Heart left ventricle (tissue), 16 donors: ENCODE measurements at regions of chr13 and their contacts with region 1.

Region 1: GRCh38 chr13:41061075-41061913 is at the start of gene WBP4:
- DNase-seq: peak; percentile 95 to 96 (median 96)
- ATAC-seq: peak; percentile 78 to 88 (median 84)
- H3K4me3 ChIP-seq: peak within 1 kb of the TSS; percentile 54 to 90 (median 79)
- H3K27ac ChIP-seq: peak within 1 kb of the TSS; percentile 92 to 100 (median 98)
- H3K4me1 ChIP-seq: peaks cover 6 to 71% (median 60%) of the 10 kb centered on the region in 12 donors
- H3K27me3 ChIP-seq: no peaks in the 10 kb centered on the region
- CTCF ChIP-seq: peak in 6 of 12 donors; percentile 10 to 45 (median 30)
- POLR2A ChIP-seq: peak in 1 of 2 donors; percentile 58
- total RNA-seq, gene WBP4: 12.4 to 24.6 (median 20.6) TPM

Region 2: GRCh38 chr13:40624383-40624782 is 436.9 kb before region 1 on chr13:
- intact Hi-C with region 1: no loop called
- DNase-seq: no peak
- ATAC-seq: no peak
- H3K4me3 ChIP-seq: no peak overlapping the region
- H3K27ac ChIP-seq: no peak overlapping the region
- H3K4me1 ChIP-seq: peaks cover 0 to 64% (median 40%) of the 10 kb centered on the region in 12 donors
- H3K27me3 ChIP-seq: no peaks in the 10 kb centered on the region
- CTCF ChIP-seq: no peak
- POLR2A ChIP-seq: no peak

Region 3: DNA sequence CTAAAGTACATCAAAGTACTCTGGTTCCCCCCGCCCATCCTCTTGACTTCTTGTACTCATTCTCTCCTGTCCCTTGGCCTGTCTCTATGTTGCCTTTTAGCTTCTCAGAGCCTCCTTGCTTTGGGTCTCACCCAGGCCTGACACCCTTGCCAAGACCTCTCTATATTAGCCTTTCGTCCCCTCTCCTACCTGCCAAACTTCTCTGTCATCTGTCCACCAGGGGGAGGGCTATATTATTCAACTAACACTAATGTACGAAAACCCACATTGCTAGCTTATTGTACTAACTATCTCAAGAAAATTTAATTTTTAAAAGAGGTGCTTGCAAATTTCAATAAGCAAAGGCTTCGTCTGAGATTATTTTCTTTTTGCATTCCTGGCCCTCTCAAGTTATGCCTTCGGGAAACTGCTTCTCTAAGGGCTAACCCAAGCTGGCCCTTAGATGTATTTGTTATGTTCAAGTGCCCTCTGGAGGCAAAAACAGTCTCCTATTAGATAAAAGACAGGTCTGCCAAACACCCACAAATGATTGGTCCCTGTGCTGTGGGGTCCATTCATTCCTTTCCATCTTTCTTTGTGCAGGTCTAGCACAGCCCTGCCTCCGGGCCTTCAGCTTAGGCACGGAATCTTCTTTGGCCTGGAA is 284.0 kb before region 1 on chr13:
- intact Hi-C with region 1: loop called in 6 of 10 experiments (anchors 5 to 10 kb)
- DNase-seq: no peak
- ATAC-seq: peak; percentile 72 to 87 (median 80)
- H3K4me3 ChIP-seq: peak overlapping the region in 8 of 12 donors; percentile 21 to 54 (median 34)
- H3K27ac ChIP-seq: peak overlapping the region in 1 of 12 donors; percentile 79
- H3K4me1 ChIP-seq: peaks cover 0 to 19% (median 2%) of the 10 kb centered on the region in 12 donors
- H3K27me3 ChIP-seq: no peaks in the 10 kb centered on the region
- CTCF ChIP-seq: peak; percentile 36 to 81 (median 68)
- POLR2A ChIP-seq: no peak

Region 4: DNA sequence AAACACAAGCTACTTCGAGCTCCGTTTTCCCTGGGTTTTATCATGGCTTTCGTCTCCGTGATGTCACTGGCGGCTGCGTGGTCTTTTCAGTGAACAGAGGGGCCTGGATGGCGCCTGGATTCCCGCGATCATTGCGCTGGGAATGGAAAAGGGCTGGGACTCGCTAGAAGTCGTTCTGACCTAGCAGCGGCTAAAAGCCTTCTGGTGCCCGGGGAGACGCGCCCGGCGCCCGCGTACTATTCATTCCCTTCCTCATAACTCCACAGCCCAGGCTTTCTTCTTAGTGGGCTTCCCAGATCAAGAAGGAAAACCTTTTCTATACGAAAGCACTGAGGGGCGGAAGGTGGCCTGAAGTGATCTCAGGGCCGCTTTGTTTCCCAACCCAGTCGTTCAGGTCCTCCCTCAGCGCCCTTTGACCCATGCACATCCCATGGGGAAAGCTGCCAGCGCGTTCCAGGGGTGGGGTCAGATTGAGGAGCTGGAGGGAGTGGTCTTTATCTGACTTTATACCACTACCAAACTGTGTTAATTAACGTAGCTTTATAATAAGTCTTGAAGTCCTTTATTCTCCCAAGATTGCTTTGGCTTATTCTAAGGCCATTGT is 138.8 kb before region 1 on chr13:
- intact Hi-C with region 1: loop called in 7 of 10 experiments (anchors 1 to 10 kb)
- DNase-seq: peak in 3 of 5 donors; percentile 13 to 62 (median 29)
- ATAC-seq: no peak
- H3K4me3 ChIP-seq: peak overlapping the region in 2 of 12 donors; percentile 4 to 76
- H3K27ac ChIP-seq: peak overlapping the region in 1 of 12 donors; percentile 88
- H3K4me1 ChIP-seq: peaks cover 0 to 16% (median 7%) of the 10 kb centered on the region in 12 donors
- H3K27me3 ChIP-seq: no peaks in the 10 kb centered on the region
- CTCF ChIP-seq: no peak
- POLR2A ChIP-seq: no peak

Region 5: DNA sequence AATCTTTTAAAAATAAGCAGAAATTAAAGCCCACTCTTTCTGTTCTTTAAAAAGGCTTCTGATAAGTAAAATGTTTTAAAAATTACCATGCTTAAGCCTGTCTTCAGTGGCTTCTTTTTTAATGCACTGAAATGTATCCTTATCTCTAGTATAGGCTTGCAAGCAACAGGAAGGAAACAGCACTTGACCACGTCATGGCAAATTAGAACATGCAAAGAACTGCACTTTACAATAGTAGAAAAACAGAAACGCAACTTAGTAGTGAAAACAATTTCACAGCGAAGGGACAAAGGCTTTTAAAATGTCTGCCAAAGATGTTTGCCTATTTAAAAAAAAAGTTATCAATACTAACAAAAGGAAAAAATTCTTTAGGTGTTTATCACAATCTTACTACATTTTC is 78.5 kb before region 1 on chr13:
- intact Hi-C with region 1: loop called in 8 of 10 experiments (anchors 2 to 10 kb)
- DNase-seq: peak in 4 of 5 donors; percentile 33 to 73 (median 49)
- ATAC-seq: peak; percentile 64 to 88 (median 72)
- H3K4me3 ChIP-seq: peak overlapping the region in 11 of 12 donors; percentile 24 to 57 (median 45)
- H3K27ac ChIP-seq: peak overlapping the region; percentile 73 to 95 (median 82)
- H3K4me1 ChIP-seq: peaks cover 20 to 91% (median 56%) of the 10 kb centered on the region in 12 donors
- H3K27me3 ChIP-seq: no peaks in the 10 kb centered on the region
- CTCF ChIP-seq: no peak
- POLR2A ChIP-seq: peak in 1 of 2 donors; percentile 30

Region 6: GRCh38 chr13:41193919-41194824 is 132.9 kb after region 1 on chr13 and contains the start of gene KBTBD7:
- intact Hi-C with region 1: loop called in 1 of 10 experiments (anchors 5 kb)
- DNase-seq: peak; percentile 94 to 97 (median 96)
- ATAC-seq: peak; percentile 95 to 100 (median 100)
- H3K4me3 ChIP-seq: peak within 1 kb of the TSS; percentile 56 to 92 (median 78)
- H3K27ac ChIP-seq: peak within 1 kb of the TSS; percentile 75 to 97 (median 92)
- H3K4me1 ChIP-seq: peaks cover 0 to 37% (median 17%) of the 10 kb centered on the region in 12 donors
- H3K27me3 ChIP-seq: no peaks in the 10 kb centered on the region
- CTCF ChIP-seq: peak in 3 of 12 donors; percentile 11 to 31 (median 18)
- POLR2A ChIP-seq: peak in 1 of 2 donors; percentile 82
- total RNA-seq, gene KBTBD7: 4.2 to 9.1 (median 6.0) TPM